ENCODE measurements at regions of chr2 and their contacts with region 1.

Region 1: DNA sequence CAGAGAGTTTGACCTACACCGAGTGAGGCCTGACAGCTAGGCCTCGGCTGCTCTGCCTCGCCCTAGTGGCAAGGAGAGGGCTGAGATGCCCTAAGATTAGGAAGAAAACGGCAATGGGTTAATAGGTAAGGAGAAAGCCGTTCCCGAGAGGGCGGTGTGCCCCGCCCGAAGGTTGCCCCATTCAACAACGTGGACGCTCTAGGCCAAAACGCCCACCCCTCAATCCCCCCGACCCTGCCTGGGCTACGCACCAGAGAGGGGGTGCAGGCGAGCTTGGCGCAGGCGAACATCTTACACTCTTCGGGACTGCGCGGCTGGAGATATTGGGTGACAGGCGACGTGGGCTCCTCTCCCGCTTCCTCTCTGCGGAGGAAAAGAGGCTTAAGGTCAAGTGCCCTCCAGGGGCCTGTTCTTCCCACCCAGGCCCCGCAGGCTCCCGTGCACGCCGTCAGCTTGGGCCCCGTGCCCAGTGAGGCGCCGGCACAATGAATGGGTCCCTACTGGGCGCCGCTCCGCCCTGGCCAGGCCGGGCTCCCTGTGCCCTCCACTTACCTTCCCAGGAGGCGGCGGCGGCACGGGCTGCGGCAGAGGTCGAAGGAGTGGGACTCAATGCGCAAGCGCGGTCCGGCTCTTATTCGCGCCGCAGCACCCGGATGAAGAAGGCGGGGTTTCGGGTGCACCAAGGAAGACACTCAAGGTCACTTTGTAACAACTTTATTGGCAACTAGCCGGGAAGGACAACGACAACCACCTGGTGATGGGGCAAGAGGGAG is at the start of gene ATP5MC3:
- DNase-seq: peak; percentile 80 to 97 (median 92)
- ATAC-seq: peak; percentile 90
- H3K4me3 ChIP-seq: peak within 1 kb of the TSS; percentile 88 to 96
- H3K4me3 Mint-ChIP-seq: peak within 1 kb of the TSS; percentile 94
- H3K27ac ChIP-seq: peak within 1 kb of the TSS; percentile 73 to 76
- H3K27ac Mint-ChIP-seq: peak within 1 kb of the TSS; percentile 87
- H3K4me1 ChIP-seq: peaks cover 13% of the 10 kb centered on the region
- H3K4me1 Mint-ChIP-seq: peaks cover 27% of the 10 kb centered on the region
- H3K27me3 ChIP-seq: no peaks in the 10 kb centered on the region
- H3K27me3 Mint-ChIP-seq: no peaks in the 10 kb centered on the region
- CTCF ChIP-seq: no peak
- total RNA-seq, gene ATP5MC3: 70.2 to 73.4 TPM

Region 2: GRCh38 chr2:175030380-175031271 is 150.7 kb before region 1 on chr2:
- CTCF ChIA-PET with region 1: no interaction called
- POLR2A ChIA-PET with region 1: no interaction called
- intact Hi-C with region 1: loop called (anchors 5 to 10 kb)
- DNase-seq: peak in 2 of 9 experiments; percentile 6 to 12
- ATAC-seq: no peak
- H3K4me3 ChIP-seq: no peak overlapping the region
- H3K4me3 Mint-ChIP-seq: no peak overlapping the region
- H3K27ac ChIP-seq: no peak overlapping the region
- H3K27ac Mint-ChIP-seq: no peak overlapping the region
- H3K4me1 ChIP-seq: no peaks in the 10 kb centered on the region
- H3K4me1 Mint-ChIP-seq: no peaks in the 10 kb centered on the region
- H3K27me3 ChIP-seq: no peaks in the 10 kb centered on the region
- H3K27me3 Mint-ChIP-seq: no peaks in the 10 kb centered on the region
- CTCF ChIP-seq: no peak

Region 3: DNA sequence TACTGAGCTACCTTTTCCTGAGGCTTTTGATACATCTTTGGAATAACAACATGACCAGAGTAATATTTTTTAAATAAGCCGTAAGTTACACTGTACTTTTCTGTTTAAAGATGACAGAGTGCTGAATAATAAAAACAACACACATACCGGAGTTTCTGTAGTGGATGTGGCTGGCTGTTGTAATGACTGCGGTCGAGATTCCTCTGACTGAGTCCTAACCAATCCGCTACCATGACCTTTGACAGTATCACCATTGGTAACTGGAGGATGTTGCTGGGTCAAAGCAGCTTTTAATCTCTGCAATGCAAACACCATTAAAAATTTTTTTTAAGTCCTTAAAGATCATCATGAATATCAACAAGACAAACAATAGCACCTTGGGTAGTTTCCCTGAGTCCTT is 84.0 kb before region 1 on chr2:
- CTCF ChIA-PET with region 1: no interaction called
- POLR2A ChIA-PET with region 1: no interaction called
- intact Hi-C with region 1: no loop called
- DNase-seq: no peak
- ATAC-seq: no peak
- H3K4me3 ChIP-seq: no peak overlapping the region
- H3K4me3 Mint-ChIP-seq: no peak overlapping the region
- H3K27ac ChIP-seq: no peak overlapping the region
- H3K27ac Mint-ChIP-seq: no peak overlapping the region
- H3K4me1 ChIP-seq: no peaks in the 10 kb centered on the region
- H3K4me1 Mint-ChIP-seq: peaks cover 2% of the 10 kb centered on the region
- H3K27me3 ChIP-seq: no peaks in the 10 kb centered on the region
- H3K27me3 Mint-ChIP-seq: no peaks in the 10 kb centered on the region
- CTCF ChIP-seq: no peak

Region 4: DNA sequence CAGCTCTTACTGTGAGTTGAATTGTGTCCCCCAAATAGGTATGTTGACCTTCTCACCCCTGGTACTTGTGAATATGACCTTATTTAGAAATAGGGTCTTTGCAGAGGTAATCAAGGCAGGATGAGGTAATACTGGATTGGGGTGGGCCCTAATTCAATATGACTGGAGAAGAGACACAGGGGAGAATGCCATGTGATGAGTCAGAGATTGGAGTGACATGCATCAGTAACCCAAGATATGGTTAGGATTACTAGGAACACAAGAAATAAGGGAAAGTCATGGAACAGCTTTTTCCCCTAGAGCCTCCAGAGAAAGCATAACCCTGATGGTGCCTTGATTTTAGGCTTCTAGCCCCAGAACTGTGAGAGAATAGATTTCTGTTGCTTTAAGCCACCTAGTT is 37.3 kb after region 1 on chr2:
- CTCF ChIA-PET with region 1: no interaction called
- POLR2A ChIA-PET with region 1: no interaction called
- intact Hi-C with region 1: no loop called
- DNase-seq: no peak
- ATAC-seq: no peak
- H3K4me3 ChIP-seq: no peak overlapping the region
- H3K4me3 Mint-ChIP-seq: no peak overlapping the region
- H3K27ac ChIP-seq: no peak overlapping the region
- H3K27ac Mint-ChIP-seq: no peak overlapping the region
- H3K4me1 ChIP-seq: no peaks in the 10 kb centered on the region
- H3K4me1 Mint-ChIP-seq: no peaks in the 10 kb centered on the region
- H3K27me3 ChIP-seq: peaks cover 0 to 2% of the 10 kb centered on the region in 2 experiments
- H3K27me3 Mint-ChIP-seq: peaks cover 31% of the 10 kb centered on the region
- CTCF ChIP-seq: no peak